HCT116 (cell line): ENCODE measurements at regions of chr10 and their contacts with region 1.

Region 1: DNA sequence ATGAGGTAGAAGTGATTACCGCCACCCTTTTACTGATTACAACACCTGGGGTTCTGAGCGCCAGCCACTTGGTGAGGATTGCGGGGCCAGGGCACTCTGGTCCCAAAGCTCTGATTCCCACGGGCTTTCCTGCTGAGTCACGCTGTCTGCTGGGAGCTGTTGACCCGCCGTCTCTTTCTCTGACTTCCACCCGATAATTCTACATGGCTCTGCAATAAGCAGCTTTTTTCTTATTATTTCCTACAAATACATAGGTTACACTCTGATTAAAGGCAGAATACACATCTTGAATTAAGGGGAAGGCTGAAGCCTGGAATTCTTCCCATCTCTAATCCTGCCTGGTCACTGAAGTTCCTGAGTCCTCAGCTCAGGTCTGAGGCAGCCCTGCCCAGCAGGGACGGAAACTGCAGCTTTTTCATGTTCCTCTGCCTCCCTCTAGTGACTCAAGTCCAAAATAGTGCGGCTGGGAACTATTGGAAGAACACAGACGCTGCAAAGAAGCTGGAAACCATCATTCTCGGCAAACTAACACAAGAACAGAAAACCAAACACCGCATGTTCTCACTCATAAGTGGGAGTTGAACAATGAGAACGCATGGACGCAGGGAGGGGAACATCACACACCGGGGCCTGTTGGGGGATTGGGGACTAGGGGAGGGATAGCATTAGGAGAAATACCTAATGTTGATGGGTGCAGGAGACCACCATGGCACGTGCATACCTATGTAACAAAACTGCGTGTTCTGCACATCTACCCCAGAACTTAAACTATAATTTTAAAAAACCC is 178.3 kb downstream of the PRKCQ start:
- DNase-seq: peak; percentile 89
- ATAC-seq: peak; percentile 97
- H3K4me3 ChIP-seq: peak overlapping the region; percentile 46 to 57
- H3K27ac ChIP-seq: peak overlapping the region; percentile 0; the same call in 1 of the 2 replicates
- H3K4me1 ChIP-seq: peaks cover 0 to 11% of the 10 kb centered on the region in 2 experiments; a peak in 2 of 4 replicates
- H3K27me3 ChIP-seq: no peaks in the 10 kb centered on the region
- CTCF ChIP-seq: peak; percentile 66 to 96 (median 81)
- POLR2A ChIP-seq: no peak
- RAD21 ChIP-seq: peak; percentile 97

Region 2: GRCh38 chr10:5948999-5949759 is 452.6 kb before region 1 on chr10:
- CTCF ChIA-PET with region 1: interaction called, 9 read pairs
- POLR2A ChIA-PET with region 1: no interaction called
- RAD21 ChIA-PET with region 1: interaction called in 1 of 2 experiments, 5 read pairs
- intact Hi-C with region 1: loop called (anchors 5 kb)
- DNase-seq: peak; percentile 32
- ATAC-seq: peak; percentile 90
- H3K4me3 ChIP-seq: no peak overlapping the region
- H3K27ac ChIP-seq: no peak overlapping the region
- H3K4me1 ChIP-seq: peaks cover 14 to 18% of the 10 kb centered on the region in 2 experiments; a peak in 3 of 4 replicates
- H3K27me3 ChIP-seq: no peaks in the 10 kb centered on the region
- CTCF ChIP-seq: peak; percentile 69 to 91 (median 73)
- POLR2A ChIP-seq: no peak
- RAD21 ChIP-seq: peak; percentile 88

Region 3: DNA sequence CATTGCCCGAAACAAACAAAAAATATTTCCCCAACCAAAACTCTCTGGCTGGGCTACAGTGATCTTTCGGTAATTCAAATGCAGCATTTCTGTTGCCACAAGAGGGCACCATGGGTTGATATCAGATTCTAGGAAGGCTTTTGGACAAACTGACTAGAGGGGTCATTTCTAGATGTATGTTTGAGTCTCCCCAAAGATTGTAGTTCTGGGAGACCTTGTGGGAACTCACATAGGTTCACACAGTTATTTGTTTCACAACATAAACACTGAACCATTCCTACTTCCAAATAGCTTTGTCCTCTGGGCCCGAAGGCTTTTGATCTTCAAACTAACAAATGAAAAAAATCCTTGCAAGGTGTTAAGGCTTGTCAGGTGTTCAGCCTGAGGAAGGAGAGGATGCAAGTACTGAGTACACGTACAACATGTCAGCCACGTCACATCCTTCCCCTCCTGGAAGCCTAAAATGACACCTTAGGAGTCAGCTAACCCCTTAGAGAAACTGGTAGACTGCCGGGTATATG is 387.5 kb before region 1 on chr10:
- CTCF ChIA-PET with region 1: interaction called, 17 read pairs
- POLR2A ChIA-PET with region 1: no interaction called
- RAD21 ChIA-PET with region 1: interaction called in 1 of 2 experiments, 3 read pairs
- intact Hi-C with region 1: loop called (anchors 1 kb)
- DNase-seq: peak; percentile 29
- ATAC-seq: peak; percentile 91
- H3K4me3 ChIP-seq: no peak overlapping the region
- H3K27ac ChIP-seq: no peak overlapping the region
- H3K4me1 ChIP-seq: 0 out of 4 replicates have a peak, but pooled peaks cover 0 to 2% of the 10 kb centered on the region in 2 experiments
- H3K27me3 ChIP-seq: no peaks in the 10 kb centered on the region
- CTCF ChIP-seq: peak; percentile 77 to 88 (median 84)
- POLR2A ChIP-seq: no peak
- RAD21 ChIP-seq: peak; percentile 67

Region 4: GRCh38 chr10:6088721-6089390 is 312.9 kb before region 1 on chr10 and contains the start of gene RBM17:
- CTCF ChIA-PET with region 1: interaction called, 8 read pairs
- POLR2A ChIA-PET with region 1: no interaction called
- RAD21 ChIA-PET with region 1: interaction called in 1 of 2 experiments, 3 read pairs
- intact Hi-C with region 1: loop called (anchors 5 kb)
- DNase-seq: peak; percentile 94
- ATAC-seq: peak; percentile 88
- H3K4me3 ChIP-seq: peak within 1 kb of the TSS; percentile 89 to 97
- H3K27ac ChIP-seq: peak within 1 kb of the TSS; percentile 78
- H3K4me1 ChIP-seq: peaks cover 5 to 15% of the 10 kb centered on the region in 2 experiments; a peak in 3 of 4 replicates
- H3K27me3 ChIP-seq: peaks cover 2% of the 10 kb centered on the region; the same call in 1 of the 2 replicates
- CTCF ChIP-seq: peak; percentile 100
- POLR2A ChIP-seq: peak; percentile 68
- RAD21 ChIP-seq: peak; percentile 83
- total RNA-seq, gene RBM17: 129 TPM

Region 5: DNA sequence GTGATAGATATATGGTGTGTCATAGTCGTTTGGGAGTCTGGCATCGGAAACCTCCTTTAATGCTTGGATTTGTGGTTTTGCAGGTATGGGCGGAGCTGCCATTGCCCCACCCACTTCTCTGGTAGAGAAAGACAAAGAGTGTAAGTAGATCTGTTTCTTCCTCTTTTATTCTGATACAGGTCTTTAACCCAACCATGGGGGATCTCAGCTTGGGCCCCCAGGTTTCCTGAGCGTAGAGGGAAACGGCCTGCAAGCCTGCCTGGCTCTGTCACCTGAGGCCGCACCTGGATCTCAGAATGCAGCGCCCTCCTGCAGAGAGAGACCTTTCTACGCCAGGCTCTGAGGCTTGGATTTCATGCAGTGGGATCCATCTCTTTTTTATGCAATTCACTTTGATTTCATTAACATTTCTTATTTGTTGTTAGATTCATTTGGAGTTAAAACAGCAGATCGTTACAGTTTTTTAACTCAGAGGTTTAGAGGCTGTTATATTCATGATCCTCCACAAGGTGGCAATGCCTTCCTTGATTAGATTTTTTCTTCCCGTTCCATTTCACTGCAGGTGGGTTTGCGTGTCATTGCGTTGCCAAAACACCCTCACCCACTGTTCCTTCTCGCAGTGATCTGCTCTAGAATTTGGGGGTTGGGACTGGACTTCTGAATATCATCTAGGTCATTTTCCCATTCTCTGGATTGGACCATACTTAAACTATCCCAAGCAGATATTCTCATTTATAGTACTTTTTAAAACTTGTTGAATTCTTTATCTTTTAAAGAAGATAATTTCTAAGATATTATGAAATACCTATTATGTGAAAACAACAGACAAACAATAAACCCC is 292.9 kb before region 1 on chr10:
- CTCF ChIA-PET with region 1: interaction called, 15 read pairs
- POLR2A ChIA-PET with region 1: no interaction called
- RAD21 ChIA-PET with region 1: interaction called in 1 of 2 experiments, 4 read pairs
- intact Hi-C with region 1: loop called (anchors 1 kb)
- DNase-seq: peak; percentile 13
- ATAC-seq: peak; percentile 72
- H3K4me3 ChIP-seq: no peak overlapping the region
- H3K27ac ChIP-seq: no peak overlapping the region
- H3K4me1 ChIP-seq: peaks cover 7 to 9% of the 10 kb centered on the region in 2 experiments; a peak in 3 of 4 replicates
- H3K27me3 ChIP-seq: no peaks in the 10 kb centered on the region
- CTCF ChIP-seq: peak; percentile 53 to 70 (median 67)
- POLR2A ChIP-seq: no peak
- RAD21 ChIP-seq: peak; percentile 69

Region 6: DNA sequence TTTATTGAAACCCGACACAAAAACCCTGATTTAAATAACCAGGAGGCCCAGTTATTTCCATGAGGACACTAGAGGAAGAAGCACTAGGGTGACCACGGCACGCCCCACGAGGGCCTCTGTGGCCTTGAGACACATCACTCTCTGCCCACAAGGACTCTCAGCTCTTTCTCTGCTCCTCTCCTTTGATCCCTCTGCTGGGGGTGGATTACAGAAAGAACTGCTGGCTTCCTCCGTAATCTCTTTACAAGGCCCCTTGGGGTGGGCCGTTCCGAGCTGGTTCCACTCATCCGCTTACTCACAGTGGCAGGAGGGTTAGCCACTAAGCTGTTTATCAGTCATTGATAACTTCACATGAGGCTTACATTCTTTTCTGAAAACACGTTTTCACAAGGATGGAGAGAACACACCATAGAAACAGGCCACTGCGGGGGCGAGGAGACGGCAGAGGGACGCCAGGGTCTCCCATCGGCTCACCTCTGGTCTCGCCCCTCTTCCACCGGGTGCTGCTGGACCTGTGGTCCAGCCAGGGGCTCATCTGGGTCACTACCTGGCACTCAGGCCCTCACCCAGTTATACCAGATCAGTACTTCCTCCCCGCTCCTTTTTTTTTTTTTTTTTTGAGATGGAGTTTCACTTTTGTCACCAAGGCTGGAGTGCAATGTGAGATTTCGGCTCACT is 216.6 kb before region 1 on chr10:
- CTCF ChIA-PET with region 1: interaction called, 9 read pairs
- POLR2A ChIA-PET with region 1: no interaction called
- RAD21 ChIA-PET with region 1: no interaction called
- intact Hi-C with region 1: loop called (anchors 5 kb)
- DNase-seq: no peak
- ATAC-seq: no peak
- H3K4me3 ChIP-seq: no peak overlapping the region
- H3K27ac ChIP-seq: no peak overlapping the region
- H3K4me1 ChIP-seq: peaks cover 15 to 19% of the 10 kb centered on the region in 2 experiments
- H3K27me3 ChIP-seq: no peaks in the 10 kb centered on the region
- CTCF ChIP-seq: no peak
- POLR2A ChIP-seq: no peak
- RAD21 ChIP-seq: no peak

Region 7: GRCh38 chr10:6202684-6203330 is 198.9 kb before region 1 on chr10 and contains the start of gene PFKFB3:
- CTCF ChIA-PET with region 1: interaction called, 118 read pairs
- POLR2A ChIA-PET with region 1: interaction called, 33 read pairs
- RAD21 ChIA-PET with region 1: interaction called, 23 to 25 read pairs
- intact Hi-C with region 1: loop called (anchors 1 kb)
- DNase-seq: peak; percentile 71
- ATAC-seq: peak; percentile 89
- H3K4me3 ChIP-seq: peak within 1 kb of the TSS; percentile 58 to 74
- H3K27ac ChIP-seq: peak within 1 kb of the TSS; percentile 94
- H3K4me1 ChIP-seq: peaks cover 0 to 27% of the 10 kb centered on the region in 2 experiments; a peak in 3 of 4 replicates
- H3K27me3 ChIP-seq: no peaks in the 10 kb centered on the region
- CTCF ChIP-seq: peak; percentile 76 to 91 (median 83)
- POLR2A ChIP-seq: peak; percentile 88
- RAD21 ChIP-seq: peak; percentile 95
- total RNA-seq, gene PFKFB3: 50.8 TPM